A549 (cell line): ENCODE measurements at regions of chr2 and their contacts with region 1.

Region 1: DNA sequence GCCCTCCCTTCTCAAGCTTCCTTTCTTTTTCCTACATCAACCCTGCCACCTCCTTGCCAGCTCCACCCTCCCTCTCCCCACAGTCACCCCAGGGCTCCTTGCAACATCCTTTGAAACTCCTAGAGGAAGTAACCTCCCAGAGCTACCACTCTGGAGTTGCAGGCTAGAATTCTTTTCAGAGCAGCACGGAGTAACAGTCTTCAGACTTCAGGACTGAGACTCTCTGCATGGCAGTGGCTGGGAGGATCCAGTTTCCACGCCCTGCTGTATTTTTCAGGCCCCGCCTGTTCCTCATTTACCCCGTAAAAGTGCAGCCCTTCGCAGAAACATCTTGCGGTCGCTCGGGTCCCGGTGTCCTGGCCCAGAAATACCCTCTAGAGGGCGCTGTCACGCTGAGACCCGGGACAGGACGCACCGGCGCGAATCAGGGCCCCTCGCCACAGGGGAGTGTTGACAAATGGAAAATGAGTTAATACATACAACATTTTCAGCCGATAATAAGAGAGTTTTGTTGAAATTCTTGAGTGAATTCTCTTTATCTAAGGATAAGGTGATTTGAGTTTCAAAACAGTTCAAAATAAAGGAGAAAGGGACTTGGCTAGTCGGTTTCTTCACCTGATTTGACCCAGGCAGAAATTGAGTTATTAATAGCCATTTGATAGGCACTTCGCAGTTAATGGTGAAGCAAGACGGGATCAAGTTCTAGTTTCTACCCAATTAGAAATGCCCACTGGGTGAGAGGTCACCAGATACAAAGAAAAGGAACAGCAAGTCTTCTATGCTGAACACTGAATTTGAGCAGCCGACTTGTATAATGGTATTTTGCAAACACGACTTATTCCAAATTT is 18.5 kb upstream of the NTSR2 start:
- DNase-seq: peak; percentile 79 to 93
- ATAC-seq: peak; percentile 77 to 94
- H3K4me3 ChIP-seq: peak overlapping the region; percentile 13; the same call in 2 of the 3 replicates
- H3K27ac ChIP-seq: peak overlapping the region; percentile 15 to 55; a peak in 4 of 6 replicates
- H3K4me1 ChIP-seq: peaks cover 9% of the 10 kb centered on the region; the same call in 1 of the 3 replicates
- CTCF ChIP-seq: peak; percentile 96
- EP300 ChIP-seq: 0 out of 5 replicates have a peak, but pooled peaks of 1 of the 2 experiments have one; percentile 11
- POLR2A ChIP-seq: no peak
- RAD21 ChIP-seq: peak; percentile 79 to 90

Region 2: GRCh38 chr2:11703700-11704099 is 15.3 kb after region 1 on chr2:
- CTCF ChIA-PET with region 1: interaction called, 26 read pairs
- POLR2A ChIA-PET with region 1: no interaction called
- DNase-seq: no peak
- ATAC-seq: no peak
- H3K4me3 ChIP-seq: no peak overlapping the region
- H3K27ac ChIP-seq: no peak overlapping the region
- H3K4me1 ChIP-seq: no peaks in the 10 kb centered on the region
- CTCF ChIP-seq: no peak
- EP300 ChIP-seq: no peak
- POLR2A ChIP-seq: no peak
- RAD21 ChIP-seq: no peak

Region 3: GRCh38 chr2:11743846-11744553 is 55.6 kb after region 1 on chr2:
- CTCF ChIA-PET with region 1: interaction called, 83 read pairs
- POLR2A ChIA-PET with region 1: interaction called, 4 read pairs
- DNase-seq: peak; percentile 99 to 100
- ATAC-seq: peak; percentile 87 to 96
- H3K4me3 ChIP-seq: peak overlapping the region; percentile 24; the same call in 1 of the 3 replicates
- H3K27ac ChIP-seq: peak overlapping the region; percentile 86 to 90
- H3K4me1 ChIP-seq: peaks cover 48% of the 10 kb centered on the region
- CTCF ChIP-seq: 0 out of 3 replicates have a peak, but pooled peaks have one; percentile 32
- EP300 ChIP-seq: peak in 1 of 2 experiments; percentile 44; a peak in 1 of 5 replicates
- POLR2A ChIP-seq: no peak
- RAD21 ChIP-seq: 0 out of 5 replicates have a peak, but pooled peaks of 1 of the 2 experiments have one; percentile 19

Region 4: DNA sequence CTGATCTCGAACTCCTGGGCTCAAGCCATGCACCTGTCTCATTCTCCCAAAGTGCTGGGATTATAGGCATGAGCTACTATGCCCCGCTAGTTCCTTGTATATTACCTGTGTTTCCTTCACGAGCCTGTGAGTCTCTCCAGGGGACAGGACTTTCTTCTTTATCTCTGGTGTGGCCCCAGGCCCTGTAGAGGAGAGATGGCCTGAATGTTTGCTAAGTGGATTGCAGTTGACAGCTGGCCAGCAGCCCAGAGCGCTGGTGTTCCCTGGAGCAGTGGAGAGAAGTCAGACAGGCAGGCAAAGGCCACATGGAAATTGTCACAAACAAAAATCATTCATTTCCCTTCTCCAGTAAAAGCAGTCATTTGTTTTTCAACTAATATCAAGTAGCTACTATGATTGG is 75.9 kb after region 1 on chr2:
- CTCF ChIA-PET with region 1: interaction called, 14 read pairs
- POLR2A ChIA-PET with region 1: no interaction called
- DNase-seq: no peak
- ATAC-seq: no peak
- H3K4me3 ChIP-seq: no peak overlapping the region
- H3K27ac ChIP-seq: no peak overlapping the region
- H3K4me1 ChIP-seq: peaks cover 5% of the 10 kb centered on the region; the same call in 1 of the 3 replicates
- CTCF ChIP-seq: no peak
- EP300 ChIP-seq: no peak
- POLR2A ChIP-seq: no peak
- RAD21 ChIP-seq: no peak

Region 5: GRCh38 chr2:11891028-11891427 is 202.6 kb after region 1 on chr2:
- CTCF ChIA-PET with region 1: no interaction called
- POLR2A ChIA-PET with region 1: no interaction called
- DNase-seq: no peak
- ATAC-seq: no peak
- H3K4me3 ChIP-seq: no peak overlapping the region
- H3K27ac ChIP-seq: no peak overlapping the region
- H3K4me1 ChIP-seq: no peaks in the 10 kb centered on the region
- CTCF ChIP-seq: no peak
- EP300 ChIP-seq: no peak
- POLR2A ChIP-seq: no peak
- RAD21 ChIP-seq: no peak

Region 6: DNA sequence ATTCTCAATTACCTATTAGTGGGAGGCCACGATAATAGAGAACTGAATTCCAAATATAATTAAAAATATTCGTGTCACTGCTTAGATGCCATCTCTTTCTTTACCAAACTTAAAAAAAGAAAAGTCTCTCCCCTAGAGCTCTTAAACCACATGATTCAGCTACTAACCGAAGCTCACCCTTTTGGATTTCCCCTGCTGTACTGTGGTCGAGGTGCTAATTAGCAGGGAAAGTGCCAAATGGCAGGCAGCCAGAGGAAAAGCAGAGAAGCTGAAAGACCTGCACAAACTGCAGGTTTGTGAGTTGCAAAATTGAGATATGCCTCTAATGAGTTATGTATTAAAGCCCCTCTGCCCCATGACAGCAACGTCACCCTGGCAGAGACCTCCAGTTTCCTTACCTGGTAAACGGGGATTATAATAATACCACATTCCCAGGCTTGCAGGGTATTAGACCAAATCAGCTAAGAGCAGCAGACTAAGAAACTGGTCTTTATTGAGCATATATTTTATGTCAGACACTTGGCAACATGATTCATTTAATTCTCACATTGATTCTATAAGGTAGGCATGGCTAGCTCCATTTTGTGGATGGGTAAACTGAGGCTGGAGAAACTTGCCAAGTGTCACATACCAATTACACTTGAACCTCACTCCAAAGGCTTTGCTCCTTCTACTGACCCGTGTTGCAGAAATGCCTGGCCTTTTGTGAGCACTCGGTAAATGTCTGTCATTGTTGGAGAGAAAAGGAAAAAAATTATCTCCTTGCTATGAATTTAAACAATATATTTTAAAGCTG is 317.6 kb after region 1 on chr2:
- CTCF ChIA-PET with region 1: no interaction called
- POLR2A ChIA-PET with region 1: no interaction called
- DNase-seq: no peak
- ATAC-seq: no peak
- H3K4me3 ChIP-seq: no peak overlapping the region
- H3K27ac ChIP-seq: no peak overlapping the region
- H3K4me1 ChIP-seq: peaks cover 12% of the 10 kb centered on the region; the same call in 1 of the 3 replicates
- CTCF ChIP-seq: no peak
- EP300 ChIP-seq: no peak
- POLR2A ChIP-seq: no peak
- RAD21 ChIP-seq: no peak